Prostate gland (tissue), 2 donors: ENCODE measurements at regions of chr6 and their contacts with region 1.

Region 1: DNA sequence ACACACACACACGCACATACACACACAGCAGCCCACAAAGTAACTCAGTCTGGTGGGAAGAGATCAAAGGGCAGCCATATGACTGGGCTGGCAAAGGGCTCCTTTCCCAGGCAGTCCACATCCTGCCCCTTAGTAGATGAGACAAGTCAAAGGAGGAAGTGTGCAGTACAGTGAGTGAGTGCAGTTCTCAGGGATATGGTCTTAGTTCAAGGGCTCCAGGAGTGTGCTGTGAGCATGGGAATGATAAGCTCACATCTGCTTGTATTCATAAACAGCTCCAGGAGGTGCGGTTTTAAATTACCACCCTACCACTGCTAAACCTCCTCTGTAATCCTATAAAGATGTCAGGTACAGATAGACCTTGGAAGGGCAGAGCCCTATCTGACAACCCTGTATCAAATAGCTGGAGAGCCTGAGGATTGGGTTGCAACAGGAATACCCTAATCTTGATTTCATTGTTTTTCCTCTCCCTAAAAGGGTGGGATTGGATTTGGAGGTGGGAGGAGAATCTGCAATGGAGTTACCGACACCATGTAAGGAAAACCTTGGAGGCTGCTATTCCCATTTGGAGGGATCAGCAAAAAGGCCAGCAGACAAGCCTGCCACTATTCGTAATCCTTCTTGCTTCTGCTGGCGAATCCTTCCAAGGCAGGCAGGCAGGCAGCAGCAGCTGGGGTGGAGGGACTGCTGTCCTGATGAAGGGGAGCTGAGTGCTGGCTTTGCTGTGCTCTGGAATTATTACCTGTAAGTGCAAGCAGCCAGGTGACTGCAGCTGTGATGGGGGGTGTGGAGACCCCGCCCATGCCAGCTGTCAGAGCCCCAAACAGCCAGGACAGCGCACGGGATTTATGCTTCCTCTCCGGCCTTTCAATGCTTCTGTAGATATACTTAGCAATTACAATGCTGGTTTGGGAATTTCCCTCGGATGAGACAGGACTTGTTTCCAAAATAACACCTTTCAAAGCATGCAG is 342.7 kb downstream of the PRL start:
- DNase-seq: peak; percentile 12
- H3K4me3 ChIP-seq: no peak overlapping the region
- H3K27ac ChIP-seq: peak overlapping the region; percentile 11 to 52
- H3K4me1 ChIP-seq: peaks cover 12% of the 10 kb centered on the region
- H3K27me3 ChIP-seq: no peaks in the 10 kb centered on the region
- CTCF ChIP-seq: no peak
- POLR2A ChIP-seq: no peak

Region 2: GRCh38 chr6:21831521-21832291 is 122.4 kb before region 1 on chr6:
- intact Hi-C with region 1: loop called (anchors 10 kb)
- DNase-seq: no peak
- H3K4me3 ChIP-seq: no peak overlapping the region
- H3K27ac ChIP-seq: peak overlapping the region; percentile 12 to 39
- H3K4me1 ChIP-seq: no peaks in the 10 kb centered on the region
- H3K27me3 ChIP-seq: no peaks in the 10 kb centered on the region
- CTCF ChIP-seq: no peak
- POLR2A ChIP-seq: no peak

Region 3: GRCh38 chr6:21987501-21987957 is 33.4 kb after region 1 on chr6:
- intact Hi-C with region 1: loop called (anchors 5 kb)
- DNase-seq: peak; percentile 34
- H3K4me3 ChIP-seq: no peak overlapping the region
- H3K27ac ChIP-seq: peak overlapping the region; percentile 43 to 48
- H3K4me1 ChIP-seq: peaks cover 4% of the 10 kb centered on the region
- H3K27me3 ChIP-seq: no peaks in the 10 kb centered on the region
- CTCF ChIP-seq: no peak
- POLR2A ChIP-seq: no peak

Region 4: DNA sequence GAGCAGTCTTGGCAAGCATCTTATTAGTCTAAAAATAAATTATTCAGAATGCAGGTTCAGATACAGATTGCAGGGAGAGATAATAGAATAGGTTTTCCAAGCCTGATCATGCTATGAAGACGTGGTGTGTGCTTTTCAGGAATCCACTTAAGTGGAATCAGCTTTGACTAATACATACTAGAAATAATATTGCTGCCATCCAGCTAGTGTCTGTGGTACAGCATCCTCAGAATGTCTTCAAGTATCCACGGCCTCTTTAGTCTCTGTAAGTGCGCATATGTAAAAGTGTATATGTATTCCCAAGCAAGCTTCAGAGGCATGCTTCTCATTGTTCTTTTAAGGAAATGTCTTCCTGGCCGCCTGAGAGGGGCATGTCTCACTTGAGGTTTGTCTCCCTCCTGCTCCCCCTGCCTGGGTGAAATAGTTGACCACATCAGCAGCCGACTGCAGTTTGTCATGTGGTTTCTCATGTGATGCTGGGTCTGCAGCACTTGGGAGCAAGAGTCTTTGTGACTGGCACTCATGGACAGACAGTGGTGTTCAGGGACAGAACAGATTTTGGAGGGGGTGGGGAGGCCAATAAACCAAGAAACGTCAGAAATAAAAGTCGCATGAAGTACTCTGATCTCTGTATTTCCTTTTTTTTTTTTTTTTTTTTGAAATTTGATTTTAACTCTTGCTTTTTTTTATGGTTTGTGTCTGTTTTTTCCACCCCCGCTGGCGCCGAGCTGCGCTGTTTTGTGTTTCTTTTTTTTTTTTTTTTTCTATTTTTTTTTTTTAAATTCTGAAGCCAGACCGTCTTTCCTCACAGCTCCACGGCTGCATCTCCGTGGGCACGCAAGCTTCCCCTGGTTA is 191.9 kb after region 1 on chr6:
- intact Hi-C with region 1: loop called (anchors 10 kb)
- DNase-seq: no peak
- H3K4me3 ChIP-seq: no peak overlapping the region
- H3K27ac ChIP-seq: no peak overlapping the region
- H3K4me1 ChIP-seq: no peaks in the 10 kb centered on the region
- H3K27me3 ChIP-seq: no peaks in the 10 kb centered on the region
- CTCF ChIP-seq: peak in 2 of 4 experiments; percentile 37 to 41
- POLR2A ChIP-seq: no peak